ENCODE measurements at regions of chr4 and their contacts with region 1.

Region 1: DNA sequence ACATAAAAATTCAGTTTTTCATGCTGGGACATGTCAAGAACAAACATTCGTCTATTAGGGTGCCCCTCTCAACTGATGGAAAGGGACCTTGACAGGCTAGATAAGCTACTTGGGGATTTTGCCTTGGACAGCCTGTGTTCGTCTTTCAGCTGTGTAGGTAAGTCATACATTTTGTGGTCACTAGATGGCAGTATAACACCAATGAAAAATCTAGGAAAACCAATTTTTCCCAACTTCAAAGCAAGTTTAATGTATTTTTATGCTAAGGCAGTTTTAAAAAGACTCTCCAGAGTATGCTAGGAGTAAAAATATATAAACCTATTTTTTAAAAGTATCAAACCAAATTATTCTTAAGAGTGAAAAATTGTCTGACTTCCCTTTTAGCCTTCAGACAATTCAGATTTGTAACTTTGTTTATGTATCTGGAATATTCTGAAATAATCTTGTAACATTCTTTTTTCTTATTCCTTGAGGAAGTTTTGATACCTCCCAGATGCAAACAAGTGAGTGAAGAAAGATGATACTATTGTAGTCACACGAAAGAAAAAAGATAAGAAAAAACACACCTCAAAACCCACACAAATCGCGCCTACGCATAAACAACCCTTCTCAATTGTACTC is 158.3 kb downstream of the CPE start:
- DNase-seq: no peak
- ATAC-seq: peak; percentile 64 to 71
- H3K4me3 ChIP-seq: no peak overlapping the region
- H3K27ac ChIP-seq: no peak overlapping the region
- H3K4me1 ChIP-seq: no peaks in the 10 kb centered on the region
- H3K27me3 ChIP-seq: no peaks in the 10 kb centered on the region
- CTCF ChIP-seq: peak; percentile 76

Region 2: DNA sequence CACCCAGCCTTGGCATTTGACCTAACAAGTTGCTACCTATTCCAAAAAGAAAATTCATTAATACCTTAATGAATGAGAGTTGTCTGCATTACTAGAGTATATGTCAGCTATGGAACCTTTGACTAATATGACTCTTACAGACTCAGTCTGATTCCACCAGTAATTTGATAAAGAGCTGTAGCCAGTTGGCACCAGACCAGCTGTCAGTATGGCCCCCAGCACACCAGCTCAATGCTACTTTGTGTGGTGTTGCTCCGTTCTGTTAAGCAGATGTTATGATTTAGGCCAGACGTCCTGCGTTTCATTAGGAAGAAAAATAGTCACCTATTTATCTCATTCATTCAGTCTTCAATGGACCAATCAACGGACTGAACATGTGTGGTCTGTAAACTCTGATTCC is 551.4 kb after region 1 on chr4:
- intact Hi-C with region 1: loop called (anchors 5 kb)
- DNase-seq: no peak
- ATAC-seq: no peak
- H3K4me3 ChIP-seq: no peak overlapping the region
- H3K27ac ChIP-seq: no peak overlapping the region
- H3K4me1 ChIP-seq: no peaks in the 10 kb centered on the region
- H3K27me3 ChIP-seq: no peaks in the 10 kb centered on the region
- CTCF ChIP-seq: no peak